ENCODE measurements at regions of chr7 and their contacts with region 1.

Region 1: GRCh38 chr7:42237162-42237821 is at the start of gene GLI3:
- DNase-seq: peak; percentile 95
- H3K4me3 Mint-ChIP-seq: peak within 1 kb of the TSS; percentile 97
- H3K27ac Mint-ChIP-seq: peak within 1 kb of the TSS; percentile 96
- H3K4me1 Mint-ChIP-seq: peaks cover 45% of the 10 kb centered on the region
- H3K27me3 Mint-ChIP-seq: no peaks in the 10 kb centered on the region
- CTCF ChIP-seq: peak; percentile 12
- total RNA-seq, gene GLI3: 23.1 and 27.6 TPM in 2 replicates

Region 2: DNA sequence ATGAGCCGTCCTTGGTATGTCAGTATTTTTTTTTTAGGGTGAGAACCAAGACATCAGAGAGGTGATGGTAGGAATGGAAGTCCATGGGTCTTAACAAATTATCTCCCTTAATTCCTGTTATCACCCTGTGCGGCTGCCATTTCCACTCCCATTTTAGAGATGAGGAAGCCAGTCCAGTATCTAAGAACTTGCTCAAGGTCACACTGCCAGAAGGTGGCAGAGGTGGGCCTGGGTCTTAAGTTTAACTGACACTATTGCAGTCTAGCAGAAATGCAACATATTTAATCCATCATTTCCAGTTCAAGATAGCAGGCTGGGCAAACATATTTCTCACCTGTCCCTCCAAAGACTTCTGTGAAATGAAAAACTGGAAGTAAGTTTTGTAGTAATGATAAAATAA is 108.6 kb before region 1 on chr7:
- CTCF ChIA-PET with region 1: no interaction called
- POLR2A ChIA-PET with region 1: no interaction called
- intact Hi-C with region 1: loop called (anchors 2 kb)
- DNase-seq: peak; percentile 33
- H3K4me3 Mint-ChIP-seq: no peak overlapping the region
- H3K27ac Mint-ChIP-seq: no peak overlapping the region
- H3K4me1 Mint-ChIP-seq: peaks cover 8% of the 10 kb centered on the region
- H3K27me3 Mint-ChIP-seq: no peaks in the 10 kb centered on the region
- CTCF ChIP-seq: peak; percentile 27

Region 3: GRCh38 chr7:42192851-42193461 is 44.3 kb before region 1 on chr7:
- CTCF ChIA-PET with region 1: interaction called, 3 read pairs
- POLR2A ChIA-PET with region 1: interaction called, 71 read pairs
- intact Hi-C with region 1: loop called (anchors 2 kb)
- DNase-seq: peak; percentile 53
- H3K4me3 Mint-ChIP-seq: peak overlapping the region; percentile 57
- H3K27ac Mint-ChIP-seq: peak overlapping the region; percentile 85
- H3K4me1 Mint-ChIP-seq: peaks cover 66% of the 10 kb centered on the region
- H3K27me3 Mint-ChIP-seq: no peaks in the 10 kb centered on the region
- CTCF ChIP-seq: no peak

Region 4: DNA sequence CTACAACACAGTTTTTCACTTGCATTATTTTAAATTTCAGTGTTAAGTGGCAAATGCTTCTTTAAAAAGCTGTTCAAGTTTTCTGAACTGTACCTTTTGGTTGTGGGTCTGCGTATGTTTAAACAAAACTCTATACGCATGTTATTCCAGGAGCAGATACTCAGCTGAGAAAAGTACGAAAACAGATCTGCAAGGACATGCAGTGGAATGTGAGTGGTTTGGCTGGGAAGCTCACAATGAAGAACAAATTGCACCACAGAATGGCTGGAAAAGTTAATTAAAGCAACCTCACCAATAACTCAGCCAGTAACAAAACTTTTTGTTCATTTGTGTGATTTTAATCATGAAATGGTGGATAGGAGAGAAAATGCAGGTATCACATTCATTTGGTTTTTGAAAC is 17.8 kb before region 1 on chr7:
- CTCF ChIA-PET with region 1: interaction called, 9 read pairs
- POLR2A ChIA-PET with region 1: interaction called, 135 read pairs
- intact Hi-C with region 1: no loop called
- DNase-seq: peak; percentile 64
- H3K4me3 Mint-ChIP-seq: peak overlapping the region; percentile 50
- H3K27ac Mint-ChIP-seq: peak overlapping the region; percentile 59
- H3K4me1 Mint-ChIP-seq: peaks cover 33% of the 10 kb centered on the region
- H3K27me3 Mint-ChIP-seq: no peaks in the 10 kb centered on the region
- CTCF ChIP-seq: no peak

Region 5: GRCh38 chr7:42315631-42316030 is 78.3 kb after region 1 on chr7:
- CTCF ChIA-PET with region 1: no interaction called
- POLR2A ChIA-PET with region 1: no interaction called
- intact Hi-C with region 1: no loop called
- DNase-seq: peak; percentile 34
- H3K4me3 Mint-ChIP-seq: no peak overlapping the region
- H3K27ac Mint-ChIP-seq: peak overlapping the region; percentile 36
- H3K4me1 Mint-ChIP-seq: peaks cover 18% of the 10 kb centered on the region
- H3K27me3 Mint-ChIP-seq: no peaks in the 10 kb centered on the region
- CTCF ChIP-seq: no peak

Region 6: DNA sequence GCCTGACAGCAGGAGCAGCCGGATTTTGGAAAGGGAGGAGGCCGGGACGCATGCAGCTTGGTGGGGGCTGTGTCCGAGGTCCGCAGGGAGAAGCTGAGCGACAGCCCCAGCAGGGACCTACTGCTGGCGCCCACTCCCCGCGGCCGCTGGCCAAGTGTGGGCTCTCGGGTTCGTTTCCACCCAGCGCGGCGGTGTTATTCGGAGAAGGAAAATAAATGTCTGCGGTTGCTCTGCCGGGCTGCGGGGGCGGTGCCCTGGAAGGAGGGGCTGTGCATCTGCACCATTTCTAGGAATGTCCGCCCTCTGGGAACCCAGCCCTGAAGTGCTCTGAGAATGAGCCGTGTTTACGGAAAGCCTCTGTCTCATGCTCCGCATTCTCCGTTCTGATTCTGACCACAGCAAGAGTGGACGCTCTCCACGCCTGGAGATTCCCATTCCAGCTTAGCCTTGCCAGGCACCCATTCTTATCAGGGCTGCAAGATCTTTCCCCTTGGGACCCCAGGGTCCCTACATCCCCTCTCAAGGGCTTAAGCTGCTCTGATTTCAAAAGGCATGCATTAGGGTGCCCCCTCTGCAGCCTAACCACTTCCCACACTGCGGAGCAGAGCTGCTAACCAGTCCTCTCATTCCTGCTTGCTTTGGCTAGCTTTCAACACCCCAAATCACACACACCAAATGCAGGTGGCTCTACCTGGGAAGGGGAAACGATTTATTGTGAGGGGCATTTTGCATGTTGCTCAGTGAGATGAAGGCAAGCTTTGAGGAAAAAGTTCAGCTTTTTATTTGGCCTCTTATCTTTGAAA is 256.3 kb after region 1 on chr7:
- CTCF ChIA-PET with region 1: interaction called, 3 read pairs
- POLR2A ChIA-PET with region 1: interaction called, 5 read pairs
- intact Hi-C with region 1: loop called (anchors 2 kb)
- DNase-seq: peak; percentile 94
- H3K4me3 Mint-ChIP-seq: peak overlapping the region; percentile 79
- H3K27ac Mint-ChIP-seq: peak overlapping the region; percentile 93
- H3K4me1 Mint-ChIP-seq: peaks cover 29% of the 10 kb centered on the region
- H3K27me3 Mint-ChIP-seq: no peaks in the 10 kb centered on the region
- CTCF ChIP-seq: no peak

Region 7: GRCh38 chr7:42831718-42832431 is 594.6 kb after region 1 on chr7:
- CTCF ChIA-PET with region 1: interaction called, 5 read pairs
- POLR2A ChIA-PET with region 1: no interaction called
- intact Hi-C with region 1: loop called (anchors 10 kb)
- DNase-seq: peak; percentile 61
- H3K4me3 Mint-ChIP-seq: no peak overlapping the region
- H3K27ac Mint-ChIP-seq: no peak overlapping the region
- H3K4me1 Mint-ChIP-seq: peaks cover 16% of the 10 kb centered on the region
- H3K27me3 Mint-ChIP-seq: no peaks in the 10 kb centered on the region
- CTCF ChIP-seq: peak; percentile 61